ENCODE measurements at regions of chr17 and their contacts with region 1.

Region 1: GRCh38 chr17:65988081-65988850 is 203.7 kb downstream of the CEP112 start:
- DNase-seq: no peak
- H3K4me3 ChIP-seq: no peak overlapping the region
- H3K27ac ChIP-seq: no peak overlapping the region
- H3K4me1 ChIP-seq: no peaks in the 10 kb centered on the region
- H3K27me3 ChIP-seq: no peaks in the 10 kb centered on the region
- CTCF ChIP-seq: peak in 1 of 4 experiments; percentile 44
- EP300 ChIP-seq: no peak
- POLR2A ChIP-seq: no peak

Region 2: GRCh38 chr17:65294179-65294720 is 694.0 kb before region 1 on chr17:
- intact Hi-C with region 1: loop called (anchors 10 kb)
- DNase-seq: peak; percentile 76
- H3K4me3 ChIP-seq: no peak overlapping the region
- H3K27ac ChIP-seq: no peak overlapping the region
- H3K4me1 ChIP-seq: peaks cover 0 to 9% (median 0%) of the 10 kb centered on the region in 4 donors
- H3K27me3 ChIP-seq: no peaks in the 10 kb centered on the region
- CTCF ChIP-seq: peak in 3 of 4 experiments; percentile 70 to 83 (median 72)
- EP300 ChIP-seq: no peak
- POLR2A ChIP-seq: no peak

Region 3: GRCh38 chr17:65867014-65867413 is 121.3 kb before region 1 on chr17:
- intact Hi-C with region 1: no loop called
- DNase-seq: no peak
- H3K4me3 ChIP-seq: no peak overlapping the region
- H3K27ac ChIP-seq: no peak overlapping the region
- H3K4me1 ChIP-seq: no peaks in the 10 kb centered on the region
- H3K27me3 ChIP-seq: no peaks in the 10 kb centered on the region
- CTCF ChIP-seq: no peak
- EP300 ChIP-seq: no peak
- POLR2A ChIP-seq: no peak

Region 4: GRCh38 chr17:65975878-65976277 is 12.4 kb before region 1 on chr17:
- intact Hi-C with region 1: no loop called
- DNase-seq: no peak
- H3K4me3 ChIP-seq: no peak overlapping the region
- H3K27ac ChIP-seq: no peak overlapping the region
- H3K4me1 ChIP-seq: no peaks in the 10 kb centered on the region
- H3K27me3 ChIP-seq: no peaks in the 10 kb centered on the region
- CTCF ChIP-seq: no peak
- EP300 ChIP-seq: no peak
- POLR2A ChIP-seq: no peak

Measured in sigmoid colon (tissue), 7 donors.